AG04449 (cell line): ENCODE measurements at regions of chr12 and their contacts with region 1.

Region 1: DNA sequence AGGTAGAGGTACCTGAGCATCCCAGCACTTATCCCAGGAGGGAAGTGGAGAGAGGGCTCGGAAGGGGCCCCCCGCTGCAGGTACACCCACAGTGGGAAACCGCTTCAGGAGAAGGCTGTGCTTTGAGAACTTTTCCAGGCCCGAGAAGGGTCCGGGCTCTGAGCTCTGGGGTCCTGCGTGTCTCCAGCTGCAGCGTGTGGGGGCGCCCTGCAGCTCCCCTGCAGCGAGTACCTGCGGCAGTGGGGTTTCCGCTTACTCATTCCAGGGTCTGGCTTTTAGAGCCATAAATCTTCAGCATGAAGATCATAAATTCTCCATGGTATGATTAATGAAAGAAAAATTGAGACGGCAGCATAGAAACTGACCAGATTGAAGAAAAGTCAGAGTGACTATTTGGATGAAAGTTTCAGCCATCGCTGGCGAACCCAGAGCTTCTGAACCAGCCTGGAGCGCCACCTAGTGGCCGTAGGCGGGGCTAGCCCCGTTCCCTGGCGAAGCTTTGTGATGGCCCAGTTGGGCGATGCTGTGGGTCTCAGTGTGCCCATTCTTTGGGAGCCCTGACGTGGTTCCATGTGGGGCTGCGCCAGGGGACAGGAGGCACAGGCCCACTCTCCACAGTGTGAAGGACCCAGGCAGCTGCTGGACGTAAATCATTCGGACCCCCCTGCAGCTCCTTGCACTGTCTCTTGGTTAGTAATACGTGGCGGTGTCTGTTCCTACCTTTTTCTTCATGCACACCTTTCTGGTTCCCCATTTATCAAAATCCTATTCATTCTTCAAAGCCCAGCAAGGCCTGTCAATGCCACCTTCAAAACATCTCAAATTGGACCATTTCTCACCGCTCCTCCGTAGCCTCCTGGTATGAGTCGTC is 198.2 kb downstream of the TSPAN9 start:
- DNase-seq: no peak
- H3K4me3 ChIP-seq: no peak overlapping the region
- CTCF ChIP-seq: peak; percentile 95

Region 2: GRCh38 chr12:3073438-3074250 is 201.8 kb before region 1 on chr12:
- CTCF ChIA-PET with region 1: interaction called, 250 read pairs
- POLR2A ChIA-PET with region 1: interaction called, 8 read pairs
- DNase-seq: peak; percentile 42
- H3K4me3 ChIP-seq: no peak overlapping the region
- CTCF ChIP-seq: peak; percentile 91

Region 3: GRCh38 chr12:3145033-3145432 is 130.4 kb before region 1 on chr12:
- CTCF ChIA-PET with region 1: interaction called, 534 read pairs
- POLR2A ChIA-PET with region 1: no interaction called
- DNase-seq: no peak
- H3K4me3 ChIP-seq: no peak overlapping the region
- CTCF ChIP-seq: no peak

Region 4: DNA sequence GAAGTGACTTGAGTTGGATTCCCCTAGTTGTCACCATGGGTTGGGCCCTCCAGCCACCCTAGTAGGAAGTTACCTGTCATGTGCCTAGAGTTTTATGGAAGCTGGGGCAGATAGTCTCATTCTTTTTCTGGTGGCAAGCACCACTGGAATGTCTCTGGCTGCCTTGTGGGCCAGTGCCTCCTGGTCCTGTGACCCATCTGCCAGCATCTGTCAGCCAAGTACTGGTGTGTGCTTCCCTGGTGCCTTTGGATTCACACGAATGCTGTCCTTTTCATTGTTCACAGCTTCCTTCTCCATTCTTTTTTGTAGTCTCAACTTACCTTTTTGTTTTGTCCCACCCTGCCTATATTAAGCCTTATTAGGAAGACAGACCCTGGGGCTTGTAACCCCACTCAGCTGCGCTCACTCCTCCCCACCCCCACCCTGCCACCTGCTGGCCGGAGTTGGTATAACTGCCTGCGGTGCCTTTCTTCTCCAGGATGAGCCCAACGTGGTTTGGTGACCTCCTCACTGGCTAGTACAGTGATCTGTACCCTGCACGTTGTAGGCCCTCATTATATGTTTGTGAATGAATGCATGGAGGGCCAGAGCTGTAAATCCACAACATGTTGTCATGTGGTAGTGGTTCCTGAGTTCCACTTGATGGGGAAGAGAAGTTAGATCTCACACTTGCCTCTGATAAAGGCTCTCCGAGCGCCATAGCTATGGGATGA is 72.5 kb before region 1 on chr12:
- CTCF ChIA-PET with region 1: interaction called, 18 read pairs
- POLR2A ChIA-PET with region 1: no interaction called
- DNase-seq: no peak
- H3K4me3 ChIP-seq: no peak overlapping the region
- CTCF ChIP-seq: peak; percentile 90

Region 5: GRCh38 chr12:3236345-3237187 is 38.8 kb before region 1 on chr12:
- CTCF ChIA-PET with region 1: interaction called, 14 read pairs
- POLR2A ChIA-PET with region 1: interaction called, 4 read pairs
- DNase-seq: no peak
- H3K4me3 ChIP-seq: no peak overlapping the region
- CTCF ChIP-seq: no peak

Region 6: DNA sequence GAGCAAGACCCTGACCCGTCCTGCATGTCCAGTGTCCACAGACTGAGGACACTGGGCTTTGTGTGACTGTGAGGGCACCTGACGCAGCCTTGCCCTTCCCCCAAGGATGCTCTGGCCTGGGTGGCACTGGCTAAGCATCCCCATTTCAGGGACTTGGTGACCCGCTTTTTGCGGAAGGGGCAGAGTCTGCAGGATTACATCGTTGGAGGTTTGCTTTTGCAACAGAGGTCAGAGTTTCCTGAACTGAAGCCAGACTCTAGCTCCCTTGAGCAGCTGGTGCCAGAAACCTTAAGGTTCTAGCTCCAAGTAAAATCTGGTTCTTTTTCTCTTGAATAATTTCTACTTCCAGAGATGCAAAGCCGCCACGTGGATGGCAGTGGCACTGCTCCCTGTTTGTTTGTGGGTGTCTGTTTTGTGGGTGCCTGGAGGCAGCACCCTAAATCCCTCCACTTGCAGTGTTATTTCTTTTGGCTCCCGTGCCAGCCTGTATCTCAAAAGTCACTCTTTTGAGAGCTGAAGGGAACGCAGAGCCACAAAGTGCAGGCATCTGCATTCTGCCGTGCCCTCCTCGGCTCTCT is 13.5 kb before region 1 on chr12:
- CTCF ChIA-PET with region 1: interaction called, 81 read pairs
- POLR2A ChIA-PET with region 1: no interaction called
- DNase-seq: no peak
- H3K4me3 ChIP-seq: no peak overlapping the region
- CTCF ChIP-seq: no peak

Region 7: DNA sequence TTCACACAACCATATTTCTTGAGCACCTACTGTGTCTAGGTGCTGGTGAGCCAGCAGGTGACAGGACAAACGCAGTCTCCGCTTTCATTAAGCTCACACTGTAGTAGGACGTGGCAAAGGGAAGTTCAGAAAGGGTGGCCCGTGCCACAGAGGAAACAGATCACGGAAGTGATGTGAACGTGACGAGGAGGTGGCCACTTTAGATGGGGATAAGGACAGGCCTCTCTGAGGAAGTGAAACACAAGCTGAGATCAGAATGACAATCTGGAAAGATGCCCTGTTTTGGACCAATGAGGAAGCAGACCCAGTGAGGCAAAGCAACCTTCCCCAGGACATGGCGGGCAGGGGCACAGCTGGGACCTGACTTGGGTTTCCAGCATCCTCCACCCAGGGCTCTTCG is 88.2 kb after region 1 on chr12:
- CTCF ChIA-PET with region 1: no interaction called
- POLR2A ChIA-PET with region 1: no interaction called
- DNase-seq: no peak
- H3K4me3 ChIP-seq: no peak overlapping the region
- CTCF ChIP-seq: no peak

Region 8: GRCh38 chr12:3376779-3377455 is 101.5 kb after region 1 on chr12:
- CTCF ChIA-PET with region 1: no interaction called
- POLR2A ChIA-PET with region 1: no interaction called
- DNase-seq: no peak
- H3K4me3 ChIP-seq: no peak overlapping the region
- CTCF ChIP-seq: no peak

Region 9: DNA sequence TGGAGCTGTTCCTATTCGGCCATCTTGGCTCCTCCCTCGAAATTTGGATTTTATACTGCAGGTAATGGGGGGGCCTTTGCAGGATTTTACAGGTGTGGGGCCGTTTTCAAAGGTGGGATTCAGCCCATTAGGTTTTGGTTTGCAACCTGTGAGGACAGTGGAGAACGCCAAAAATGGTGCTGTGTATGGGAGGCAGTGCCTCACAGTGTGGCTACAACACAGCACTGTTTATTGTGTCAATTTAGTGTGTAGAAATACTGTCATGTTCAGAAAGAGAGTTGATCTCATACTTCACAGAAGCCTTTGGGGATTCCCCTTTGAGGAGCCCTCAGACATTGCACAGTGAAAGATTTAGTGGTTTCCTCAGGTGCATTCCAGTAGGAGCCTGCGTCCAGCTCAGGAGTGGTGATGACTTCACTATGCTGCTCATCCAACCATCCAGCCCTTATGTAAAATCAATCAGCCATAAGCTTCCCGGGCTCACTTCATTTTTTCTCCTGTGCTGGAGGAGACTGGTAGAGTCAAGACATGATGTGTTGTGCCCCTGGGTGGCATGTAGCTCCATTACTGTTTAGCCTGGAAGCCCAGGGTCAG is 122.9 kb after region 1 on chr12:
- CTCF ChIA-PET with region 1: no interaction called
- POLR2A ChIA-PET with region 1: no interaction called
- DNase-seq: no peak
- H3K4me3 ChIP-seq: no peak overlapping the region
- CTCF ChIP-seq: no peak

Region 10: DNA sequence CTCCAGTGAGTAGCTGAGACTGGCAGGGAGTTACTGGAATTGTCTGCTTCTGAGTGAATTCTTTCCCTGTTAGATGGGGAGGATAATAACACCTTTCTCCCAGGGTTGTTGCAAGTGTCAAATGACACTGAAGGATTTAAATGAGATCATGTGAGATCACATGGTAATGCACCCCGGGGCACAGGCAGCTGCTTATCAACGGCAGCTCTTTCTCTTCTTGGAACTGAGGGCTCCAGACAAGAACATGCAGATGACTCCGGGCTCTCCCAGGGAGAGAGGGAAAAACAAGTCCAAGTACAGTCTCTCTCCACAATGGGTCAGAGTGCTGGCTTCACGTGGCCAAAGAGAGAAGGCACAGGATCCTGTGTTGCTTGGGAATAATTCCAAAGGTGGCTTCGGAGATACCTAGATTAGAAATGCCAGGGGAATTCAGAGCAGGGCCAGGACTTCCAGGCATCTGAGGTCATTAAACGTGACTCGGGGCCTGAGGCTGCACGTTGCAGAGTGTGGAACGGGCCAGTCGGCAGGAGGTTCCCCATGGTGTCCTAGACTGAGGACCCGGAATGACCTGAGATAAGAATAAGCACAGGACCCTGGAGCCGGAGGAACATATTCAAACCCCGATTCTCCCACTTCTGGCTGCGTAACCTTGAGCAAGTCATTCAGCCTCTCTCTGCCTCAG is 324.8 kb after region 1 on chr12:
- CTCF ChIA-PET with region 1: no interaction called
- POLR2A ChIA-PET with region 1: no interaction called
- DNase-seq: no peak
- H3K4me3 ChIP-seq: no peak overlapping the region
- CTCF ChIP-seq: no peak